AG04449 (cell line): ENCODE measurements at regions of chr11 and their contacts with region 1.

Region 1: GRCh38 chr11:65497141-65498041 is 1.5 kb upstream of the MALAT1 start:
- DNase-seq: no peak
- H3K4me3 ChIP-seq: peak overlapping the region; percentile 68
- CTCF ChIP-seq: no peak

Region 2: GRCh38 chr11:64566042-64566914 is 931.1 kb before region 1 on chr11:
- CTCF ChIA-PET with region 1: no interaction called
- POLR2A ChIA-PET with region 1: no interaction called
- DNase-seq: no peak
- H3K4me3 ChIP-seq: peak overlapping the region; percentile 8; the same call in 1 of the 2 replicates
- CTCF ChIP-seq: no peak

Region 3: DNA sequence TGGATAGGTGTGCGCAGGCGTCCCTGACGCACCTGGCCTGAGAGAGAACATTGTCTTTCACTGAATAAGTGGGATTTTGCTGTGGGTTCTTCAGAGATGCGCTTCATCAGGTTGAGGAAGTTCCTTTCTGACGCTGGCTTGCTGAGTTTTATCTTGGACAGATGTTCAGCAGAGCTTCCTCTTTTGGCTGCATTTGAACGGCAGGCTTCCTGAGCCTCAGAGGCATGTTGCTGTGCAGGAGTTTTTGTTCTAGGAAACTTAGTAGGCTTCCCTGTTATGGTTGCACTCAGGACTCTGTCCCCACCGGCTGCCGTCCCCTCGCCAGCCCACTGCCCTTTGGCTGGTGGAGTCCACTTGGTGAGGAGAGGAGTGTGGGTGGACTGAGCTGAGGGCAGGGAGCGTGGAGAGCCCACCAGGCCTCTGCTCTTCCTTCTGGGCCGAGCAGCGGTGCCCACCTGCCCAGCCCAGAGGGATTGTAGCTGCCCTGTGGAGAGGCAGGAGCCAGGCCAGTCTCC is 93.7 kb before region 1 on chr11:
- CTCF ChIA-PET with region 1: no interaction called
- POLR2A ChIA-PET with region 1: no interaction called
- DNase-seq: no peak
- H3K4me3 ChIP-seq: no peak overlapping the region
- CTCF ChIP-seq: no peak

Region 4: GRCh38 chr11:65448418-65449105 is 48.8 kb before region 1 on chr11:
- CTCF ChIA-PET with region 1: interaction called, 4 read pairs
- POLR2A ChIA-PET with region 1: interaction called, 110 read pairs
- DNase-seq: no peak
- H3K4me3 ChIP-seq: no peak overlapping the region
- CTCF ChIP-seq: no peak

Region 5: DNA sequence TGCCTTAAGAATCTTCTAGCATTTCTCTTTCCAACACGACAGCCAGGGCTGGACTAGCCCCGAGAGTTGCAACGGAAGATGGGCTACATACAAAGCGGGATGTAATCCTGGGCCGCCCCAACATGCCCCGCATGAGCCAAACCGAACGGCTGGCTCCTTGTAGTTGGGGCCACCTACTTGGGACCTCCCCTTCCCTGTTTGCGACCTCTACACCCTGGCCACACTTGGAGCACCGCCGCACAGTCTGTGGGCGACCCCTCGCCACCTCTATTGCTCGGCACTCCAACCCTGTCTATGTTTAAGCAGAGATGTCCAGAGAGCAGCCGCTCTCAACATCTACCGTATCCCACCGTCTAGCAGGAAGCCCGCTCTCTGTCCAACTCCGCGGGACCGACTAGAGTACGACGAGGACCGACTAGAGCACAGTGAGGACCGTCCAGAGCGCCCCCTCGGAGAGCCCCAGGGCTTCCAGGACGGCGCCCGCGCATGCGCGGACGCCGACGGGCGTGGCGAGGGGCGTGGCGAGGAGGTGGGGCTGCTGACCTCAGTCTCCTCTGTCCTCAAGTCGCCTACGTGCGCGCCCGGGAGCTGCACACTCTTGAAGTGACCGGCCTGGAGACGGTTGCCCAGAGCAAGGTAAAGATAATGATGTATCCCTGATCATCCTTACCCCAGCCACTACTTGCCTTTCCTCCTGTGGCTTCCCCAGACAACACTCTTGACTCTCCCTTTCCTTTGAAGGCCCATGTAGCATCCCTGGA is 42.5 kb before region 1 on chr11:
- CTCF ChIA-PET with region 1: interaction called, 4 read pairs
- POLR2A ChIA-PET with region 1: interaction called, 1,229 read pairs
- DNase-seq: no peak
- H3K4me3 ChIP-seq: peak overlapping the region; percentile 65
- CTCF ChIP-seq: peak; percentile 19

Region 6: GRCh38 chr11:65471410-65471762 is 26.0 kb before region 1 on chr11:
- CTCF ChIA-PET with region 1: interaction called, 96 read pairs
- POLR2A ChIA-PET with region 1: interaction called, 1,229 read pairs
- DNase-seq: no peak
- H3K4me3 ChIP-seq: peak overlapping the region; percentile 42
- CTCF ChIP-seq: peak; percentile 73

Region 7: DNA sequence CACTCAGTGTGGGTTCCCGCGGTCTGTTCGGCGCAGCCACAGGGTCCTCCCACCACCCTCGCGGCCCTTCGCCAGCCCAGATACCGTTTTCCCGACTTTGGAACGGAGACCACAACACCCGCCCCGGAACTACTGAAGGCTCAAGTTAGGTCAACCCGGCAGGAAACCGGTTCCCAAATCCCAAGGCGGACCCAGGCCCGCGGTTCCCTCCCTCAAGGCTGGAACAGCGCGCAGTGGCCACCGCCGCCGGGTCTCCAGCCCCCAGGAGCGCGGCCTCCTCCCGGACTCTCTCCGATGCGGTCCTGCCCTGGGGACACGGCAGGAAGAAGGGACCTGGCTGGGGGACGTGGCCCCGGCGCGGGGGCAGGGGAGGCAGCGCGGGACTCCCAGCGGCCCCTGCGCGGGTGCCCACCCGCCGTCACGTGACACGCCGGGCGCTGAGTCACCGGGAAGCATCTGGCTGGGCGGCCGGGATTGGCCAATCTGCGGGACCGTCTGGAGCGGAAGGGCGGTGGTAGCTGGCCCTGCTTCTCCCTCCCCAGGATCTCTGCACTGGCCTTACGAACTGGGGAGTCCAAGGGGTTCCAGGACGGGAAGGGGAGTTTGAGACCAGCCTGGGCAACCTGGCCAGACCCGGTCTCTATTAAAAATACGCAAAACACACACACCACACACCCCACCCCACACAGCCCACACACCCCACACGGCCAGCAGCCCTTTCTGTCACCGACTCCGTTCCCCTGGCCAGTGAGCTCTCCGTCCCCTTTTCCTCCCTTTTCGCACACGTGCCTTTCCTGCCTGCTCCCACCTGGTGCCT is 20.0 kb before region 1 on chr11:
- CTCF ChIA-PET with region 1: interaction called, 96 read pairs
- POLR2A ChIA-PET with region 1: interaction called, 1,229 read pairs
- DNase-seq: no peak
- H3K4me3 ChIP-seq: peak overlapping the region; percentile 78
- CTCF ChIP-seq: no peak